ENCODE measurements at regions of chr10 and their contacts with region 1.

Region 1: DNA sequence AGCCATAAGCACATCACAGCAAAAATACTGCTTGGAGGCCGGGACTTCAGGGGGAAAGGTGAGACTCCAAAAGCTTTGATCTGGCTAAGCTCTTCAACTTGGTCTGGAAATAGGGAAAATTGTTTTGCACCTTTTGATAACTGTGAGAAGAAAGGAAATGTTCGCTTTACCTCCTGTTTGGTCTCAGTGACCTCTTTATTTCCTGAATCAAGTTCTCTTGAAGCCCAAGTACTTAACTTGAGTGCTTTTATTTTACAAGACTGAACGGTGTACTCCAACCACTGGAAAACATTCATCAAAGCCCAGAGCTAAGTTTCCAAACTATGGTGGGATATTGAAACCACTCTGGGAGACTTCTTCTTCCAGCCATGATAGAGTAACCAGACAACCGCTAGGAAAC is 5.3 kb downstream of the C10orf90 start:
- DNase-seq: no peak
- ATAC-seq: no peak
- H3K4me3 Mint-ChIP-seq: no peak overlapping the region
- H3K27ac Mint-ChIP-seq: no peak overlapping the region
- H3K4me1 Mint-ChIP-seq: peaks cover 12% of the 10 kb centered on the region
- H3K27me3 Mint-ChIP-seq: peaks cover 4% of the 10 kb centered on the region; the same call in 1 of the 2 replicates
- CTCF ChIP-seq: no peak

Region 2: DNA sequence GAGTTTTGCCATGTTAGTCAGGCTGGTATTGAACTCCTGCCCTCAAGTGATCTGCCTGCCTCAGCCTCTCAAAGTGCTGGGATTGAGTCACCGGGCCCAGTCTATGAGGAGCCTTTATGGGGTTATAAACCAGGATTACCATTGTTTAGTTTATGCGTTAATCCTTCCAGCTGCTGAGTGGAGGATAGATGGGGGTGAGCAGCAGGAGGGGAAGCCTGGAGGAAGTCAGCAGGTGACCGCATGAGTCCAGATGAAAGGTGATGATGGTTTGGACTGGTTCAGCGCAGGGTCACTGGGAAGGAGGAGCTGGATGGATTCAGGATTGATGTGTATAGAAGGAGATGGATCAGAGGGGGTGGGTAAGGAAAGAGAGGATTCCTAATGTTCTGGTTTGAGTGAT is 474.0 kb before region 1 on chr10:
- CTCF ChIA-PET with region 1: no interaction called
- POLR2A ChIA-PET with region 1: interaction called, 10 read pairs
- DNase-seq: no peak
- ATAC-seq: no peak
- H3K4me3 Mint-ChIP-seq: no peak overlapping the region
- H3K27ac Mint-ChIP-seq: no peak overlapping the region
- H3K4me1 Mint-ChIP-seq: no peaks in the 10 kb centered on the region
- H3K27me3 Mint-ChIP-seq: no peaks in the 10 kb centered on the region
- CTCF ChIP-seq: no peak

Region 3: GRCh38 chr10:126551202-126551601 is 114.0 kb before region 1 on chr10:
- CTCF ChIA-PET with region 1: no interaction called
- POLR2A ChIA-PET with region 1: no interaction called
- DNase-seq: no peak
- ATAC-seq: no peak
- H3K4me3 Mint-ChIP-seq: no peak overlapping the region
- H3K27ac Mint-ChIP-seq: no peak overlapping the region
- H3K4me1 Mint-ChIP-seq: peaks cover 22% of the 10 kb centered on the region
- H3K27me3 Mint-ChIP-seq: no peaks in the 10 kb centered on the region
- CTCF ChIP-seq: no peak

Region 4: DNA sequence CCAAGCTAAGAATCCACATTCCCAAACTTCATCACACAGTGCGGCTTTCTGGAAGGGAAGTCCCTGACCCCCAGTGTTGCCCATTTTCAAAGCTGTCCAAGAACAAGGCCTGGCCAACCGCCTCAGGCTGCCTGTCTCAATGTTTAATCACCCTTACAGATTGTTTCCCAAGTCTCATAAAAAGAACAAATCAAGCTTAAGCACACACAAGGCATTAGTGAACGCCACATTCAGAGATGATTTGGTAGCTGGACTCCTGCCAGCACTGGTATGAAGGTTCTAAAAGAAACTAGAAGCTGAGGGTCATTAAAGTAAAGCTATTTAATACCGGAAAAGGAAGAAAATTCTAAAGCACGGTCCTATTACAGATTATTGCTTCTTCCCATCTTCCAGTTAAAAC is 30.3 kb before region 1 on chr10:
- CTCF ChIA-PET with region 1: no interaction called
- POLR2A ChIA-PET with region 1: no interaction called
- DNase-seq: no peak
- ATAC-seq: no peak
- H3K4me3 Mint-ChIP-seq: no peak overlapping the region
- H3K27ac Mint-ChIP-seq: no peak overlapping the region
- H3K4me1 Mint-ChIP-seq: no peaks in the 10 kb centered on the region
- H3K27me3 Mint-ChIP-seq: no peaks in the 10 kb centered on the region; the same call in 1 of the 2 replicates
- CTCF ChIP-seq: no peak